ENCODE measurements at regions of chr12 and their contacts with region 1.

Region 1: DNA sequence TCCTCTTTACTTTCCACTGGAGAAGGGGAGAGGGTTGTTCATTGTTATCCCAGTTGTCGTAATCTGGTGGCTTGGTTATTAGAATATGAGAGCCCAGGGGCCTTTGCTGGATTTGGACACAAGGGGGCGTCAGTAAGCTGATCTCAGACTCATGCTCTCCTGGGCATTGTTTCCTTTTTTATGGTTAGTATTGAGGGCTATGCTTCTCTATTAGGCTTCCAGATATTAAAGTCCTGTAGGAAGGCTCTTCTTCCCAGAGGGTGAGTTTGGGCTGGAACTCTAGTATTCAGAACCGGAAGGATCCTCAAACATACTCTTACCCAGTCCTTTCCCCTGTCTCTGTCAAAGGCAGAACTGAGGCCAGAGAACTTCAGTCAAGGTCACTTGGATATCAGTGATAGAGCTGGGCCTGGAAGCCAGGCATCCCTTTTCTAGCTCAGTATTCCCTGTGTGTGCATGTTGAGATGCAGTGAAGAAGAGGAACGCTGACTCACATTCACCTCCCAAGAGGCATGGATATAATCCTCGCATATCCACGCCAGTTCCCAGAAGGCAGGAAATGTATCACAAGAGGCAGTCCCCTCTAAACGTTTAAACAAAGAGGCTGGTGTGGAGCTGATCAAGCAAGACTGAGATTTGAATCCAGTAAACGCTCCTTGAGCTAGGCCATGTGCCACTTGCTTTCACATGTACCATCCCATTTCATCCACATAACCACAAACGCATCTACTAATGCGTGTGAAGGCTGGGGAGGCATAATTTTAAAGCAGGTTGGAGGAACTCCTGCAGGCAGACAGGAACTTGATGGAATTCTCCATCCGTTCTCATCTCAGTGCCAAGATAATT is 41.6 kb downstream of the UBE3B start:
- DNase-seq: peak in 9 of 10 donors; percentile 35 to 94 (median 81)

Region 2: GRCh38 chr12:109331301-109331952 is 187.6 kb before region 1 on chr12:
- intact Hi-C with region 1: no loop called
- DNase-seq: no peak

Region 3: DNA sequence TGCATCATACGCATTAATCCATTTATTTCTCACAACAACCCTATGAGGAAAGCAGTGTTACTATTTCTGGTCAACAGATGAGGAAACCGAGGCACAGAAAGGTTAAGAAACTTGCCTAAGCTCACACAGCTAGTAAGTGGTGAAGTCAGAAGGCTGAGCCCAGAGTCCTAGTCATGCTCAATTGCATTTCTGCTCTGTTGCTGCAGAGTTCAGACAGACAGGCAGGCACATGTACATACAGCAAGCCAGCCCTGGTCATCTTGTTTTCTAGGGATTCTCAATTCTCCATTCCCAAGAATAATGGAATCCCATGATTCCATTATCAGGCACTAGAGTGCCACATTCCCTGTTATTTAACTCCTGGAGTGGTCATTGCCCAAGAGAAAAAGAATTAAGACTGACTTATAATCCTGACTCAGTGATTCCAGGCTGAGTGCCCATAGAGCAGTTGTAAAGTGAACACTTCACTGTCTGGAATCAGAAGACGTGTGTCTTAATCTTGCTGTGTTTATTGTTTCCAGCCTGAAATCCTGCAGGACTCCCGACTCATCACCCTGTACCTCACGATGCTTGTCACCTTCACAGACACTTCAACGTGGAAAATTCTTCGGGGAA is 30.9 kb before region 1 on chr12:
- intact Hi-C with region 1: no loop called
- DNase-seq: no peak

Region 4: DNA sequence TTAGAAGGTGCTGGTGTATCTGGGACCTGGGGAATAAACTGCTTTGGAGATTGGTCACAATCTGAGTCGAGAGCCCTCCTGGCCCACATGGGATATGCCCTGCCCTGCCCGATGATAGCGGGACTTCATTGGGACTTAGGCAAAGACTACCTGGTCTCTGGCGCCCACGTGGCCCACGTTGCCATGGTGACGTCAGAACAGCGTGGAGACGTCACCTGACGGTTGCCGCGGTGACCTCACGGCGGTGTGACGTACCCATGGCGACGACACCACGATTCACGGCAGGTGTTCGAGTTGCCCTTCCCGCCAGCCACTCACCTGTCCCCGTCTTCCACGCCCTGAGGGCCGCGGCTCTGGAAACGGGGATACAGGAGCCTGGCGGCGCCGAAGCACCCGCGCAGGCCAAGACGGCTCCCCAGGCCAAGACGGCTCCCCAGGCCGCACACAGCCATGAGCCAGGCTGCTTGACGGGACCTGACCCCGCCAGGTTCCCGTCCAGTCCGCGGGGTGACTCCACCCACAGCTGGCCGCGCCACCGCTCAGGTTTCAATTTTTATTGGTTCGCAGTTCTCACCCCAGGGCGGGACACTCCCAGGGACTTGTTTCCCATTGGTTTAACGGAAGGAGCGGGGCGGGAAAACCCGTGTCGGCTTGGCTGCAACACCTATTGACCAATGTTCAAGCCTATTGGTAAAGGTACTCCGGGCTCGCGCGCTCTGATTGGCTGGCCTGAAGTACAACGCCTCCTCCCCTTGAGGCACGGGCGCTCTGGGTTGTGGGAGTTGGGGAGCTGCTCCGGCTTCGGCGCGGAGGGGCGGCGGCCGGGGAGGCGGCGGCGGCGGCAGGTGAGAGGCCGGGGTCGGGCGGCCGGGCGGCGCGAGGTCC is 54.2 kb after region 1 on chr12 and contains the starts of genes MMAB and MVK:
- intact Hi-C with region 1: loop called (anchors 10 kb)
- DNase-seq: peak; percentile 97 to 100 (median 99)

Region 5: GRCh38 chr12:109719236-109720022 is 200.4 kb after region 1 on chr12:
- intact Hi-C with region 1: loop called (anchors 5 kb)
- DNase-seq: no peak

Region 6: DNA sequence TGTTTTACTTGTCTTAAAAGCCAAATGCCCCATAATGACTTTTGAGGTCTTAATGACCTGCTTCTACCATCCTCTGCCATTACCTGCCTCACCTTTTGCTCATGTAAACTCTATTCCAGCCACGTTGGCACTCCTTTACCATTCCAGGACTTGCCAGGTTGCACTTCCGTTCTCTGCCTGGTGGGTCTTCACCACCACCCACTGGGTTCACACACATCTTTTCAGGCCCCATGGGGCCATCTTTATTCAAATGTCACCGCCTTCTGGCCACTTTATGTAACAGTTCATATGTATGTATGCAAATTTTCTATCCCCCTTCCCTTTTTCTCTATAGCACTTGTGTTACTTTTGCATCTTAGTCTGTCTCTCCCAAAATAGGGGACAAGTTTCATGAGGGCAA is 819.7 kb after region 1 on chr12:
- intact Hi-C with region 1: no loop called
- DNase-seq: no peak